ENCODE measurements at regions of chr5 and their contacts with region 1.

Region 1: DNA sequence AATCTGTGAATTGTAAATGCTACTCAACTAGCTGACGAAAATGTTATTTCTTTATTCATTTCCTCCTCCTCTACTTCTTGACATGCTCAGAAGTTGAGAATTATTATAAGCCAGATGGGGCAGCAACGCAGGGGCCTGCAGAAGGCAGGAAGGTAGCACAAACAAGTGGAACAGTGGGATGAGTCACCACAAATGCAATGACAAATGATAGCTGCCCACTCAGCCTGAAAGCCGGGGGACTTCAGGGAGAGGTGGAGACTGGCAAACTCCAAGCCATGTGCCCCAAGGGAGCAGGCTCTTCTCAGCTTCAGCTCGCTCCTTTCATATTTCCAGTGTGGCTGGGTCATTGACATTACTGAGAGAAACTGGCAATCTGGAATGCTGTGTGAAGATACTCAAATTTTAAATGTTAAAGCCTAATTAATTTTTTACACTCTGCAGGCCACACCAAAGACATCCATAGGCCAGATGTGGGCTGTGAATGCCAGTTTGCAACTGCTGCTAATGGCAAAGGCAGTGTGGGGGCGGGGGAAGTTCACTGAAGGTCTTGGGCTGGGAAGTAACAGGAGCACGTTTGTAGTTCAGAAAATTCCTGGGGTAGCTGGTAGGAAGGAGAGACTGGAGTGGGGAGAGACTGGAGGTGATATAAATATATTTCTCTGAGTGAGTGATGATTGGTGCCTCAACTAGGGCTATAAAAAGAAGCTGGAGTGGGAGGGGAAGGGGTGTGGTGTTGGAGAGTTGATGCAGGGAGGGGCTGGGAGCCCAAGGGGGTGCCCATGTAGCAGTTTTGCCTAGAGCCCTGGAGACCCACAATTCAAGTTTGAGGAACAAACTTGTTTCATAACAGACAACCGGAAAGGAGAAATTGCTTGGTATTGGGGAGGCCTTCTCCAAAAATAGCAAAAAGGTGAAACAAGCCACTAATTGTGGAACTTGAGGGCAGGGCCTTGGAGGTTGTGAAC is 20.8 kb upstream of the ADRB2 start:
- DNase-seq: peak; percentile 61
- H3K4me3 Mint-ChIP-seq: no peak overlapping the region
- H3K27ac Mint-ChIP-seq: no peak overlapping the region
- H3K4me1 Mint-ChIP-seq: peaks cover 58% of the 10 kb centered on the region
- H3K27me3 Mint-ChIP-seq: peaks cover 15% of the 10 kb centered on the region

Region 2: DNA sequence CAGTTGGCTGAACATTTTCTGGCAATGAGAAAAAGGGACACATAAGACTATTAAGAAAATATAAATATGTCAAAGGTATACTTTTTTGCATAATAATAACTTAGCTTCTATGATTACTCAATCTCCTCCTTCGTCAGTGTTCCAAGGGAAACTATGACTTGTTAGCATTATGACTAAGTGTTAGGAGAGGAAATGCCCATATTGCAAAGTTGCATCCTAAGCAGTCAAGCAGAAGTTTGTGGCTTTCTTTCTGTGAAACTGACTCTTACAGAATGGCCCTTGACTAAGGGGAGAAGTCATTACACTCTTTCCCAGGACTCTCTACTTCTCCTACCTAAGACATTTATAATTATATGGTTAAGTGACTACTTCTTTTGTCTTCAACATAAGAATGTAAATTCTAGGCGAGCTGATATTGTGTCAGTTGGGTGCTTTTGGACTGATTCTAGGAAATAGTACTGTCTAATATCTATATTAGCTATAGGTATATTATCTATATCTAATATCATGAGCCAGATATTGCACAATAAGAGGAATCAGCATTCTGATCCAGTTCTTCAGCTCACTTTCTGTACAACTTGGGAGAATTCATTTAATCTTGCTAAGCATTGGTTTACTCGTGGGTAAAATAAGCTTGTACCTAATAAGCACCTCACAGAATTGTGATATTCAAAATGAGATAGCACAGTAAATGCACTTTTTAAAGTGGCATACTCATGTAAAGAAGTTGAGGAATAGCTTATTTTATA is 619.2 kb before region 1 on chr5:
- CTCF ChIA-PET with region 1: no interaction called
- intact Hi-C with region 1: loop called (anchors 1 kb)
- DNase-seq: peak; percentile 9
- H3K4me3 Mint-ChIP-seq: no peak overlapping the region
- H3K27ac Mint-ChIP-seq: no peak overlapping the region
- H3K4me1 Mint-ChIP-seq: peaks cover 2% of the 10 kb centered on the region
- H3K27me3 Mint-ChIP-seq: peaks cover 10% of the 10 kb centered on the region

Region 3: DNA sequence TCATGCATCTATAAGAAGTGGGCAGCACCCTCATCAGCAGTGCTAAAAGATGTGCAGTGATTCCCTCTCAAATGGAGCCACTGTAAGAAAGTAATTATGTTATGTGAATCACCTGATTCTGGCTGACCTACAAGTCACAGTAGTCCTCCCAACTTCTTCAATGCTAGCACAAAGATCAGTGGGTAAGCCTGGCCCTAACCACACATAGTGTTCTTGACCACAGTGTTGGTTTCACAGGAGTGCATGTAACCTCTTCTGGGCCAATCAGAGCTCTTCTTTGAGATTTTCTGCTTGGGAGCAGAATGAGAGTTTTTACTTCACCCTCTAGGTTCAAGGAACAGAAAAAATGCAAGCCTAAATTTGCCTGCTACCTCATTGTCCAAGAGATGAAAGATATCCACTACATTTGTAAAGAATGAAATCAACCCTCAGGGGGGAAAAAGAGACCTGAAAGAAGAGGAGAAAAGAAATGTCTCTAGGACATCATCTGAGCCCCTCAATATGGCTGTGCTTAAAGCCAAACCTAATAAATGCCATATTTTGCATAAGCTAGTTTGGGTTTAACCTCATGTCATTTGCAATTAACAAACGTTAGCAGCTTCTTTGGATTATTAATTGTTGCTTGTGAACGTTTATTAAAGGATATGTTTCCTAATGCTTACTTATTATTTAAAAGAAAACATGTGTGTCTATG is 44.5 kb before region 1 on chr5:
- CTCF ChIA-PET with region 1: no interaction called
- intact Hi-C with region 1: loop called (anchors 1 kb)
- DNase-seq: no peak
- H3K4me3 Mint-ChIP-seq: no peak overlapping the region
- H3K27ac Mint-ChIP-seq: no peak overlapping the region
- H3K4me1 Mint-ChIP-seq: no peaks in the 10 kb centered on the region
- H3K27me3 Mint-ChIP-seq: peaks cover 15% of the 10 kb centered on the region

Region 4: GRCh38 chr5:148820461-148821395 is 15.1 kb after region 1 on chr5:
- CTCF ChIA-PET with region 1: interaction called, 18 read pairs
- intact Hi-C with region 1: no loop called
- DNase-seq: no peak
- H3K4me3 Mint-ChIP-seq: no peak overlapping the region
- H3K27ac Mint-ChIP-seq: no peak overlapping the region
- H3K4me1 Mint-ChIP-seq: peaks cover 5% of the 10 kb centered on the region
- H3K27me3 Mint-ChIP-seq: peaks cover 18% of the 10 kb centered on the region

Region 5: DNA sequence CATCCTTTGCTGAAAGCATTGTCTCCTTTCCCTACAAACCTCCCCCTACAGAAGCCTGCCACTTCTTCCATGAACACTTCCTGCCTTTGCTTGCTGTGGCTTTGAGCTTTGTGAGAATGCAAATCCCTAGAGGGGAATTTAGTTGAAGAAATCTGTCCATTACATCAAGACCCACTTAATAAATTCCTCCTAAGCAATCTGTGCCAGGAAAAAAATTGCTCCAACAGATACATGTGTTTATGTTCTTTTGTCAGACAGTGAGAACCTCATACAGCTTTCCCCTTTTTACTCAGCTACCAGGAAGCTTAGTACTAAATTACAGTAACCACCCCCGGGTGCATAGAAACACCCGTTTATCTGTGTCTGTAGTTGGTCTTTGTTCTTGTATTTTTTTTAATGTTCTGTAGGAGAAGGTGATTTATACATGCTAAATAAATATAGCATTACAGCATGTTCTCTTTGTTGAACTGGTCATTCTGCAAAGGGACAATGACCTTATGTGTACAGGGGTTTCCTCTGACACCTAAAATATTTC is 213.4 kb after region 1 on chr5:
- CTCF ChIA-PET with region 1: no interaction called
- intact Hi-C with region 1: loop called (anchors 5 kb)
- DNase-seq: peak; percentile 36
- H3K4me3 Mint-ChIP-seq: no peak overlapping the region
- H3K27ac Mint-ChIP-seq: peak overlapping the region; percentile 26
- H3K4me1 Mint-ChIP-seq: peaks cover 15% of the 10 kb centered on the region
- H3K27me3 Mint-ChIP-seq: peaks cover 9% of the 10 kb centered on the region

Measured in activated naive CD4-positive, alpha-beta T cell treated with anti-CD3 and anti-CD28 coated beads for 36 hours (primary cell).